Colonic mucosa (tissue), 4 donors: ENCODE measurements at regions of chr3 and their contacts with region 1.

Region 1: GRCh38 chr3:98343647-98344507 is 9.8 kb upstream of the OR5K4 start:
- DNase-seq: peak; percentile 48
- H3K4me3 ChIP-seq: no peak overlapping the region
- H3K27ac ChIP-seq: no peak overlapping the region
- H3K4me1 ChIP-seq: no peaks in the 10 kb centered on the region
- H3K27me3 ChIP-seq: no peaks in the 10 kb centered on the region
- CTCF ChIP-seq: peak; percentile 42

Region 2: DNA sequence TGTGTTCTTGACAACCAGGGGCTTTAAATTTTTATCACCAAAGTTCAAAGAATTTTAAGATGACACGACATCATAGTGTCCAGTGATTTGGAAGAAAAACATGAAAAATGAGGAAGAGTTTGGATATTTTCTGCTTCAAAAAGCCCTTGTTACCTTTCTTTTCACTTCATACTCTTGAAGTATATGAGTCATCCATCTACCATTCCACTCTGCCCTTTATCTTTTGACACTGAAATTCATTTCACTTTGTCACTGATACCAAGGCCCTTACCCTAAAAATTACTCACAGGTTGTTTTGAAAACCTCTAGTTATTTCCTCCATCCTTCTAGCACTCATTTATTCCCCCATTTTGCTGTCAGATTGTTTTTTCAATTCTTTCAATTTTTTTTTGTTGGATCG is 134.6 kb before region 1 on chr3:
- intact Hi-C with region 1: no loop called
- DNase-seq: no peak
- H3K4me3 ChIP-seq: no peak overlapping the region
- H3K27ac ChIP-seq: no peak overlapping the region
- H3K4me1 ChIP-seq: no peaks in the 10 kb centered on the region
- H3K27me3 ChIP-seq: no peaks in the 10 kb centered on the region
- CTCF ChIP-seq: no peak

Region 3: DNA sequence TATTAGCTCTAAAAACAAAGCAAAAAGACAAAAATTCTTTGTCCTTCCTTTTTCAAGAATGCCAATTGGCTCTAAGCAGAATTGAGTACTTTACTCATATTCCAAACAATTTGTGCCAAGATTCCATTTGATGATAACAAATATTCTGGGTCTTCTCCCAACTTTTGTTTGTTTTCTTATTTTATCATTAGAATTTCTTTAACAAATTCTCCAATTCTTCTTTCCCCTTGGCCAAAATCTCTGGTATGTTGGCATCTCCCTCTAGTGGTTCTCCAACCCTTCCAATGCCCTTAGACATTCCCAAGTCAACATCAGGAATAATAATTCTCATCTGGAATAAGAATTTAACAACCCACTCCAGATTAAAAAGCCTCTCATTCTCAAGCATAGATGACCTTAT is 244.2 kb after region 1 on chr3:
- intact Hi-C with region 1: loop called (anchors 10 kb)
- DNase-seq: no peak
- H3K4me3 ChIP-seq: no peak overlapping the region
- H3K27ac ChIP-seq: no peak overlapping the region
- H3K4me1 ChIP-seq: no peaks in the 10 kb centered on the region
- H3K27me3 ChIP-seq: no peaks in the 10 kb centered on the region
- CTCF ChIP-seq: no peak